ENCODE measurements at regions of chr10 and their contacts with region 1.

Region 1: GRCh38 chr10:62244780-62245467 is 23.7 kb downstream of the RTKN2 start:
- DNase-seq: peak; percentile 59
- H3K4me3 Mint-ChIP-seq: peak overlapping the region; percentile 52
- H3K27ac Mint-ChIP-seq: peak overlapping the region; percentile 65
- H3K4me1 Mint-ChIP-seq: peaks cover 38% of the 10 kb centered on the region
- H3K27me3 Mint-ChIP-seq: no peaks in the 10 kb centered on the region

Region 2: GRCh38 chr10:62082729-62083411 is 162.1 kb before region 1 on chr10:
- CTCF ChIA-PET with region 1: interaction called, 20 read pairs
- POLR2A ChIA-PET with region 1: interaction called, 13 read pairs
- DNase-seq: peak; percentile 69
- H3K4me3 Mint-ChIP-seq: peak overlapping the region; percentile 61
- H3K27ac Mint-ChIP-seq: peak overlapping the region; percentile 92
- H3K4me1 Mint-ChIP-seq: peaks cover 81% of the 10 kb centered on the region
- H3K27me3 Mint-ChIP-seq: no peaks in the 10 kb centered on the region

Region 3: GRCh38 chr10:62108759-62109586 is 136.0 kb before region 1 on chr10:
- CTCF ChIA-PET with region 1: interaction called, 11 read pairs
- POLR2A ChIA-PET with region 1: interaction called, 3 read pairs
- DNase-seq: no peak
- H3K4me3 Mint-ChIP-seq: no peak overlapping the region
- H3K27ac Mint-ChIP-seq: peak overlapping the region; percentile 62
- H3K4me1 Mint-ChIP-seq: peaks cover 53% of the 10 kb centered on the region
- H3K27me3 Mint-ChIP-seq: no peaks in the 10 kb centered on the region

Region 4: GRCh38 chr10:62264702-62265436 is 19.9 kb after region 1 on chr10:
- CTCF ChIA-PET with region 1: interaction called, 16 read pairs
- POLR2A ChIA-PET with region 1: interaction called, 3 read pairs
- DNase-seq: no peak
- H3K4me3 Mint-ChIP-seq: no peak overlapping the region
- H3K27ac Mint-ChIP-seq: no peak overlapping the region
- H3K4me1 Mint-ChIP-seq: peaks cover 27% of the 10 kb centered on the region
- H3K27me3 Mint-ChIP-seq: peaks cover 14% of the 10 kb centered on the region

Region 5: GRCh38 chr10:62384057-62384446 is 139.1 kb after region 1 on chr10:
- CTCF ChIA-PET with region 1: no interaction called
- POLR2A ChIA-PET with region 1: no interaction called
- DNase-seq: peak; percentile 77
- H3K4me3 Mint-ChIP-seq: no peak overlapping the region
- H3K27ac Mint-ChIP-seq: peak overlapping the region; percentile 15
- H3K4me1 Mint-ChIP-seq: peaks cover 28% of the 10 kb centered on the region
- H3K27me3 Mint-ChIP-seq: peaks cover 50% of the 10 kb centered on the region